ENCODE measurements at regions of chr11 and their contacts with region 1.

Region 1: GRCh38 chr11:75532200-75533048 is 6.7 kb upstream of the GDPD5 start:
- DNase-seq: peak; percentile 74
- H3K27ac ChIP-seq: no peak overlapping the region
- CTCF ChIP-seq: peak; percentile 83

Region 2: GRCh38 chr11:75388386-75389275 is 143.8 kb before region 1 on chr11:
- CTCF ChIA-PET with region 1: interaction called, 16 read pairs
- POLR2A ChIA-PET with region 1: no interaction called
- DNase-seq: peak; percentile 73
- H3K27ac ChIP-seq: no peak overlapping the region
- CTCF ChIP-seq: peak; percentile 83

Region 3: GRCh38 chr11:75445315-75445953 is 87.0 kb before region 1 on chr11:
- CTCF ChIA-PET with region 1: interaction called, 42 read pairs
- POLR2A ChIA-PET with region 1: no interaction called
- DNase-seq: peak; percentile 69
- H3K27ac ChIP-seq: no peak overlapping the region
- CTCF ChIP-seq: peak; percentile 90

Region 4: GRCh38 chr11:75450826-75451821 is 81.3 kb before region 1 on chr11:
- CTCF ChIA-PET with region 1: interaction called, 42 read pairs
- POLR2A ChIA-PET with region 1: no interaction called
- DNase-seq: no peak
- H3K27ac ChIP-seq: no peak overlapping the region
- CTCF ChIP-seq: peak; percentile 68